ENCODE measurements at regions of chr2 and their contacts with region 1.

Region 1: DNA sequence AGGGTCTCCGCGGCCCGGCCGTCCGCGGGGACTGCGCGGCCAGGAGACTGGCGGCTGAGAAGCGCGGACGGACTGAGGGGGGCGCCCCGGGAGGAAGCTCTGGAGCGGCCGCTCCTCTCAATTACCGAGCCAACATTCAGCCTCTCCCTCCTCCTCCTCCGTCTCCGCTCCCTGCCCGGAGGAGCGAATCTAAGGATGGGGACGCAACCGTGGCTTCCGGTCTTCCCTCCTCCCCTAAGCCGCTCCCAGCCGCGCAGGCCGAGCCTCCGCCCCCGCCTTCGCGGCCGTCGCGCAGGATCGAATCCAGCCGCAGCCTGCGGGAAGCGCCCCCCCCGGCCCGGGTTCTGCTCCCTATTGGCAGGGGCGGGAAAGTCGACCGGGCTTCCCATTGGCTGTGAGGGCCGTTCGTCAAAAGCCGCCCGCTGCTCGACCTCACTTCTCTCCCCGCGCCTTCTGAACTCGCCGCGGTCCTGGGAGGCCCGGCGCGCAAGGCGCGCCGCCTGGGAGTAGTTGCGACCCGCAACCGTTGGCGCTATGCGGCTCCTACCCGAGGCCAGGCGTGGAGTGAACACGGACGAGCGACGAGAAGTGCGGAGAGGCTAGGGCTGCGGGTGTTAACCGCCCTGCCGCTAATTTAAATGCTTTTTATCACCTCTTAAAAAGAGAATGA is at the start of gene HNRNPLL:
- DNase-seq: peak; percentile 95
- H3K4me3 Mint-ChIP-seq: peak within 1 kb of the TSS; percentile 90
- H3K27ac Mint-ChIP-seq: peak within 1 kb of the TSS; percentile 91
- H3K4me1 Mint-ChIP-seq: peaks cover 59% of the 10 kb centered on the region
- H3K27me3 Mint-ChIP-seq: no peaks in the 10 kb centered on the region
- total RNA-seq, gene HNRNPLL: 65.7 and 67.7 TPM in 2 replicates

Region 2: GRCh38 chr2:38581193-38582147 is 21.4 kb before region 1 on chr2:
- intact Hi-C with region 1: loop called (anchors 1 kb)
- DNase-seq: no peak
- H3K4me3 Mint-ChIP-seq: no peak overlapping the region
- H3K27ac Mint-ChIP-seq: peak overlapping the region; percentile 15
- H3K4me1 Mint-ChIP-seq: peaks cover 39% of the 10 kb centered on the region
- H3K27me3 Mint-ChIP-seq: no peaks in the 10 kb centered on the region

Region 3: DNA sequence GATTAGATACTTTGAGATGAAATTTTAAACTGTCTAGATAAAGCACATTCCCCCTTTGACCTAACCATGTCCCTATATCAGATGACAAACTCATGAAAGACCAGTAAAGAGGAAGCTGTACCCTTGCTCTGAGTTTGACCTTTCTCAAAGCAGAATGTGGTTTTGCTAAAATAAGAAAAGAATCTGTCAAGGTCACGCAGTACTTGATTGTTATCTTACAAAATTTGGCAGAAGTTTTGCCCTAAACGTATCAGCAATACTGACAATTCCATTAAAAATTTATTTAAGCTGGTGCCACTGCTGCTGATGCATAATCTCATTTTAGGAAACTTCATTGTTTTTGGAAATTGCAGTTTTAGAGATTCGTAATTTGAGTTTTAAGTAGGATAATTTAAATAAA is 31.8 kb after region 1 on chr2:
- intact Hi-C with region 1: loop called (anchors 1 kb)
- DNase-seq: no peak
- H3K4me3 Mint-ChIP-seq: peak overlapping the region; percentile 8
- H3K27ac Mint-ChIP-seq: peak overlapping the region; percentile 21
- H3K4me1 Mint-ChIP-seq: peaks cover 50% of the 10 kb centered on the region
- H3K27me3 Mint-ChIP-seq: no peaks in the 10 kb centered on the region

Region 4: DNA sequence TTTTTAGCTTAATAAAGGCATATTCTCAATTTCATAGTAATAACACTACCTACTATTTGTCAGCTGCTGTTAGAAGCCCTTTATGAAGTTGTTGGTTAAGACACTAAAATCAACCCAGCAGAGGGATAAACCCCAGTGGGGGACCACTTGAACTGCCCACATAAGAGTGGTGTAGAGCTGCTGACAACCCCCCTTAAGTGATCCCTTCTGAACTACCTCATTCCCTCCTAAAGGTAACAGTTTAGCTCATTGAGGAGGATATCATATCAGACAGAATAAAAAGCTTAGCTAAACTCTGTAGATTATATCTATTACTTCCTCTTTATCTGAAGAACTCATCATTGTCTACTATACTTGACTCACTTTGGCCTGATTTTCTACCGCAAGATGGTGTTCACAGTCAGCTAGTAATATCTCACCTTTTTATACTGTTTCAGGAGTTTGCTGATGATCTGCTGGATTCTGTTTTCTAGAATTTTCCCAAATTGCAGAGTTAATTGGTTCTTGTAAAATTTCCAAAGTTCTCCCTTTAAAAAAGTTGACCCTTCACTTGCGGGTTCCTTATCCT is 79.2 kb after region 1 on chr2:
- intact Hi-C with region 1: loop called (anchors 1 kb)
- DNase-seq: no peak
- H3K4me3 Mint-ChIP-seq: peak overlapping the region; percentile 58
- H3K27ac Mint-ChIP-seq: peak overlapping the region; percentile 81
- H3K4me1 Mint-ChIP-seq: peaks cover 54% of the 10 kb centered on the region
- H3K27me3 Mint-ChIP-seq: no peaks in the 10 kb centered on the region

Measured in activated T-helper 2 cell treated with anti-CD3 and anti-CD28 coated beads, Interferon-gamma antibody, Interleukin-2, Interleukin-4, amounts not matched to agents 10 μg/mL and 5 μg/mL and 100 μg/mL, durations not matched to agents 14 hours and 24 hours and 36 hours (primary cell).